ENCODE measurements at regions of chr6 and their contacts with region 1.

Region 1: GRCh38 chr6:78810146-78810545 is 57.2 kb upstream of the IRAK1BP1 start:
- DNase-seq: peak; percentile 81
- H3K4me3 Mint-ChIP-seq: no peak overlapping the region
- H3K27ac Mint-ChIP-seq: peak overlapping the region; percentile 85
- H3K4me1 Mint-ChIP-seq: peaks cover 29% of the 10 kb centered on the region
- H3K27me3 Mint-ChIP-seq: no peaks in the 10 kb centered on the region
- CTCF ChIP-seq: peak; percentile 50

Region 2: GRCh38 chr6:77466055-77466450 is 1344.1 kb before region 1 on chr6:
- CTCF ChIA-PET with region 1: interaction called, 10 read pairs
- POLR2A ChIA-PET with region 1: interaction called, 4 read pairs
- intact Hi-C with region 1: no loop called
- DNase-seq: peak; percentile 76
- H3K4me3 Mint-ChIP-seq: peak overlapping the region; percentile 71
- H3K27ac Mint-ChIP-seq: peak overlapping the region; percentile 2
- H3K4me1 Mint-ChIP-seq: peaks cover 7% of the 10 kb centered on the region
- H3K27me3 Mint-ChIP-seq: no peaks in the 10 kb centered on the region
- CTCF ChIP-seq: peak; percentile 82

Region 3: DNA sequence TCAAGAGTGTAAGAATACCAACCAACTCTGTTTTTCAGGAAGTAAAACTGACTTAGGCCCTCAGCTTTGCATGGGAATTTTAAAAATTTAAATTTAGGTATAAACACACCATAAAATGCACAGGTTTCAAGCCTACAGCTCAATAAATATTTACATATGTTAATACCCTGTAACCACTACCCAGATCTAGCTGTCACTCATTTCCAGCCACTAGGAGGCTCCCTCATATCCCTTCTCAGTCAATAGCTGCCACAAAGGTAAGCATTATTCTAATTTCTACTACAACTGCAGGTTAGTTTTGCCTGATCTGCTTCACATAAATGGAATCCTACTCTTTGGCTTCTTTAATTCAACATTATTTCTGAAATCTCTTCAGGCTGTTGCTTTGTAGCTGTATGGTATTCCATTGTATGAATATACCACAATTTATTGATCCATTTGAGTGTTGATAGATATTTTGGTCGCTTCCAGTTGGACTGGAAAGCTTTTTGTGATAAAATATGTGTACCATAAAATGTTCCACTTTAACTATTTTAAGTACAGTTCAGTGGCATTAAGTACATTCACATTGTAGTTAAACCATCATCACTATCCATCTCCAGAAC is 1189.8 kb before region 1 on chr6:
- CTCF ChIA-PET with region 1: interaction called, 12 read pairs
- POLR2A ChIA-PET with region 1: no interaction called
- intact Hi-C with region 1: loop called (anchors 10 kb)
- DNase-seq: peak; percentile 57
- H3K4me3 Mint-ChIP-seq: no peak overlapping the region
- H3K27ac Mint-ChIP-seq: no peak overlapping the region
- H3K4me1 Mint-ChIP-seq: no peaks in the 10 kb centered on the region
- H3K27me3 Mint-ChIP-seq: no peaks in the 10 kb centered on the region
- CTCF ChIP-seq: peak; percentile 53

Region 4: DNA sequence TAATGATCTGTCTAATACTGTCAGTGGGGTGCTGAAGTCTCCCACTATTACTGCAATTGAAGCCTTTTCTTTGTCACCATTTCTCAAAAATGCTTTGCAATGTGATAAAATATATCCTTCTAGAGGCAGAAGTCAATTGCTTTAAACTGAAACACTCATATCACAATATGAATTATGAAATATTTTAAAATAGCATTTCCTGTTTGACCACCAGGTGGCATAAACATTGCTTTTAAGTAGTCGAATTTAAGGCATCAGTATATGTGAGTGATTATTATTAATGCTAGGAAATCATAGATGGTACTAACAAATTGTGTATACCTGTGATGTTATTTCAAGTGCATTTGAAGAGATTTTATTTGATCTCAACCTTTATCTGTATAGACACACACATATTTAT is 1069.8 kb before region 1 on chr6:
- CTCF ChIA-PET with region 1: interaction called, 15 read pairs
- POLR2A ChIA-PET with region 1: no interaction called
- intact Hi-C with region 1: loop called (anchors 1 kb)
- DNase-seq: peak; percentile 43
- H3K4me3 Mint-ChIP-seq: no peak overlapping the region
- H3K27ac Mint-ChIP-seq: no peak overlapping the region
- H3K4me1 Mint-ChIP-seq: no peaks in the 10 kb centered on the region
- H3K27me3 Mint-ChIP-seq: no peaks in the 10 kb centered on the region
- CTCF ChIP-seq: peak; percentile 41

Region 5: GRCh38 chr6:78231002-78231401 is 579.1 kb before region 1 on chr6:
- CTCF ChIA-PET with region 1: no interaction called
- POLR2A ChIA-PET with region 1: no interaction called
- intact Hi-C with region 1: loop called (anchors 1 kb)
- DNase-seq: peak; percentile 48
- H3K4me3 Mint-ChIP-seq: no peak overlapping the region
- H3K27ac Mint-ChIP-seq: no peak overlapping the region
- H3K4me1 Mint-ChIP-seq: peaks cover 11% of the 10 kb centered on the region
- H3K27me3 Mint-ChIP-seq: no peaks in the 10 kb centered on the region
- CTCF ChIP-seq: no peak

Region 6: GRCh38 chr6:78436335-78436734 is 373.8 kb before region 1 on chr6:
- CTCF ChIA-PET with region 1: interaction called, 11 read pairs
- POLR2A ChIA-PET with region 1: no interaction called
- intact Hi-C with region 1: loop called (anchors 1 kb)
- DNase-seq: peak; percentile 38
- H3K4me3 Mint-ChIP-seq: no peak overlapping the region
- H3K27ac Mint-ChIP-seq: no peak overlapping the region
- H3K4me1 Mint-ChIP-seq: no peaks in the 10 kb centered on the region
- H3K27me3 Mint-ChIP-seq: no peaks in the 10 kb centered on the region
- CTCF ChIP-seq: peak; percentile 45

Region 7: DNA sequence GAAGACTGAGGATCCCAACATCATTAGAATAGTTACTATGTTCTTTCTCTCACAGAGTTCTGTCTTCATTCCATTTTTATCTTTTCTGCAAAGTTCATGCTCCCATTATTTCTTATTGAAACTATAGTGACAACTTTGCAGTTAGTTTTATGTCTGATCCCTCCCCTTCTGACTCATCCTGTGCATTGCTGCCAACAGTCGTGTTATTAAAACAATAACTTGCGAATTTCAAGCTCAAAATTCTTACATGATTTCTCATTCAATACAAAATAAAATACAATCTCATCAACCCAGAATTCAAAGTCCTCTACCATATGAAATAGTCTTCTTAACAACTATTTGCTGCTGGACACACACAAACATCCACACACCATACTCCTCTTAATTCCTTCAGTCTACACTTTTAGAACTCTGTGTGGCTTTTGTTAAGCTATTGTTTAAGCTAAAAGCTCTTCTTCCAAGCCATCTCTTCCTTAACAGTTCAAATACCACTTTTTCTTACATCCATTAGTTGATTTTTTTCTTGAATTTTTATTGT is 204.2 kb before region 1 on chr6:
- CTCF ChIA-PET with region 1: interaction called, 3 read pairs
- POLR2A ChIA-PET with region 1: interaction called, 4 read pairs
- intact Hi-C with region 1: loop called (anchors 10 kb)
- DNase-seq: peak; percentile 81
- H3K4me3 Mint-ChIP-seq: peak overlapping the region; percentile 60
- H3K27ac Mint-ChIP-seq: peak overlapping the region; percentile 83
- H3K4me1 Mint-ChIP-seq: peaks cover 26% of the 10 kb centered on the region
- H3K27me3 Mint-ChIP-seq: no peaks in the 10 kb centered on the region
- CTCF ChIP-seq: no peak

Region 8: DNA sequence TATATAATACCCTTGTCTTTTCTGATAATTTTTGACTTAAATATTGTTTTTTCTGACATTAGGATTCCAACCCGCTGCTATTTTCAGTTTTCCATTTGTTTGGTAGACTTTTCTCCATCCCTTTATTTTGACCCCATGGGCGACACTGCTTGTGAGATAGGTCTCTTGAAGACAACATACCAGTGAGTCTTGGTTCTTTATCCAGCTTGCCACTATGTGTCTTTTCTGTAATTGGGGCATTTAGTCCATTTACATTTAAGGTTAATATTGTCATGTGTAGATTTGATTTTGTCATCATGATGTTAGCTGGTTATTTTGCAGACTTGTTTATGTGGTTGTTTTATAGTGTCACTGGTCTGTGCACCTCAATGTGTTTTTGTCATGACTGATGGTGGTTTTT is 10.5 kb before region 1 on chr6:
- CTCF ChIA-PET with region 1: no interaction called
- POLR2A ChIA-PET with region 1: no interaction called
- intact Hi-C with region 1: no loop called
- DNase-seq: no peak
- H3K4me3 Mint-ChIP-seq: no peak overlapping the region
- H3K27ac Mint-ChIP-seq: no peak overlapping the region
- H3K4me1 Mint-ChIP-seq: no peaks in the 10 kb centered on the region
- H3K27me3 Mint-ChIP-seq: no peaks in the 10 kb centered on the region
- CTCF ChIP-seq: no peak

Measured in MCF 10A (cell line).